Cardiac septum (tissue), 1 donor: ENCODE measurements at regions of chr5 and their contacts with region 1.

Region 1: GRCh38 chr5:154610321-154611154 is 132.5 kb upstream of the HAND1 start:
- DNase-seq: no peak

Region 2: DNA sequence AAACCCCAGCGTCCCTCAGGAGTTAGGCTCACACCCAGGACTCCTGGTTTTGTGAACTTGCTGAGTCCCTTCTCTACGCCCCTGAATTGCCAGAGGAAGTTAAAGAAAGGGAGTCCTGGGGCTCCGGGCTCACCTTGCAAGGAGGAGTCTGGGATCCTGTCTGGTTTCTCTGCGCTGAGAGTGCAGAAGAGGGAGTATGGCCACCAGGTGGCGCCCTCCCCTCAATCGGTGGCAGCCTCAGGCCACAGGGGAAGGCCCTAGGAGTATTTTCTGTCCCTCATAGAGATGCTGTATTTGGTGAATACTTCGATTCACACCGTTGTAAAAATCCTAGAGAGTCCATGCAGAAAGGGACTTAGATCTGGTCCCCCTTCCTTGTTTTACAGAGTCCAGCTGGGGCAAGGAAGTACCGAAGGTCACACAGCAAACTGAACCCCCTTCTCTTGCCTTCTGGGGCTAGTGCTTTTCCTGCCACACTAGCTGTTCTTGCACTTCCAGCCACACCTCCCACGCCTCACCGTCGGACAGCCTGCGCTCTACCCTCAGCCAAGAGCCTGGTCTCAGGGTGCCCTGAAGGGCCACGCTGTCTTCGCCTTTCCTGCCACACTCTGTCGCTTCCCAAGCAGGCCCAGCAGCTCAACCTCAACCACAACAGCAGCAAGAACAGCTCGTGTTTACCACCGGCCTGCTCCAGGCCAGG is 142.7 kb before region 1 on chr5:
- intact Hi-C with region 1: loop called (anchors 1 kb)
- DNase-seq: peak; percentile 87

Region 3: GRCh38 chr5:155418960-155419579 is 808.5 kb after region 1 on chr5:
- intact Hi-C with region 1: no loop called
- DNase-seq: no peak